ENCODE measurements at regions of chr15 and their contacts with region 1.

Region 1: GRCh38 chr15:68053701-68054627 is at the start of gene PIAS1:
- DNase-seq: peak; percentile 91
- ATAC-seq: peak; percentile 90
- H3K4me3 Mint-ChIP-seq: peak within 1 kb of the TSS; percentile 94
- H3K27ac Mint-ChIP-seq: peak within 1 kb of the TSS; percentile 94
- H3K4me1 Mint-ChIP-seq: peaks cover 35% of the 10 kb centered on the region
- H3K27me3 Mint-ChIP-seq: no peaks in the 10 kb centered on the region
- CTCF ChIP-seq: no peak
- total RNA-seq, gene PIAS1: 47.0 and 56.3 TPM in 2 replicates

Region 2: DNA sequence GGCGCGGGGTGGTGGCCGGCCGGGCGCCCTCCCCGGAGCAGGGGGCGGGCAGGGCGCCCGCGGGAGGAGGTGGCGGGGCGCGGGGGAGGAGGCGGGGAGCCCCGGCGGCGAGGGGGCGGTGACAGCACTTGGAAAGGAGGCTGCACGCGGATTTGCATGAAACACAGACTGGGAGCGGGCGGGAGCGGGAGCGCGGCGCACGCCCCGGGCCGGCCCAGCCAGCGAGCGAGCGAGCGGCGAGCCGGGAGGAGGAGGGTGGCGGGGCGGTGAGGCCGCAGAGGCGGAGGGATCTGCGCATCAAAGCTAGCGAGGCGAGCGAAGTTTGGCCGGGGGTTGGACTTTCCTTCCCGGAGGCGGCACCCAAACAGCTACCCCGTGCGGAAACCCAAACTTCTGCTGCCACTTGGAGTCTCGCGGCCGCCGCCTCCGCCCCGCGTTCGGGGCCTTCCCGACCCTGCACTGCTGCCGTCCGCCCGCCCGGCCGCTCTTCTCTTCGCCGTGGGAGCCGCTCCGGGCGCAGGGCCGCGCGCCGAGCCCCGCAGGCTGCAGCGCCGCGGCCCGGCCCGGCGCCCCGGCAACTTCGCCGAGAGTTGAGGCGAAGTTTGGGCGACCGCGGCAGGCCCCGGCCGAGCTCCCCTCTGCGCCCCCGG is 988.4 kb before region 1 on chr15 and contains the start of gene SMAD3:
- CTCF ChIA-PET with region 1: no interaction called
- POLR2A ChIA-PET with region 1: no interaction called
- intact Hi-C with region 1: loop called (anchors 5 kb)
- DNase-seq: peak; percentile 74
- ATAC-seq: peak; percentile 71
- H3K4me3 Mint-ChIP-seq: peak within 1 kb of the TSS; percentile 98
- H3K27ac Mint-ChIP-seq: peak within 1 kb of the TSS; percentile 95
- H3K4me1 Mint-ChIP-seq: peaks cover 47% of the 10 kb centered on the region
- H3K27me3 Mint-ChIP-seq: no peaks in the 10 kb centered on the region
- CTCF ChIP-seq: no peak
- total RNA-seq, gene SMAD3: 85.9 and 118 TPM in 2 replicates

Region 3: GRCh38 chr15:67542420-67543347 is 511.3 kb before region 1 on chr15 and contains the start of gene MAP2K5:
- CTCF ChIA-PET with region 1: no interaction called
- POLR2A ChIA-PET with region 1: interaction called, 5 read pairs
- intact Hi-C with region 1: loop called (anchors 10 kb)
- DNase-seq: peak; percentile 76
- ATAC-seq: peak; percentile 73
- H3K4me3 Mint-ChIP-seq: peak within 1 kb of the TSS; percentile 94
- H3K27ac Mint-ChIP-seq: peak within 1 kb of the TSS; percentile 94
- H3K4me1 Mint-ChIP-seq: peaks cover 56% of the 10 kb centered on the region
- H3K27me3 Mint-ChIP-seq: peaks cover 5% of the 10 kb centered on the region
- CTCF ChIP-seq: no peak
- total RNA-seq, gene MAP2K5: 18.9 and 26.7 TPM in 2 replicates

Region 4: GRCh38 chr15:68081869-68082505 is 28.0 kb after region 1 on chr15:
- CTCF ChIA-PET with region 1: no interaction called
- POLR2A ChIA-PET with region 1: interaction called, 11 read pairs
- intact Hi-C with region 1: no loop called
- DNase-seq: no peak
- ATAC-seq: no peak
- H3K4me3 Mint-ChIP-seq: peak overlapping the region; percentile 28
- H3K27ac Mint-ChIP-seq: peak overlapping the region; percentile 71
- H3K4me1 Mint-ChIP-seq: peaks cover 66% of the 10 kb centered on the region
- H3K27me3 Mint-ChIP-seq: no peaks in the 10 kb centered on the region
- CTCF ChIP-seq: no peak

Region 5: DNA sequence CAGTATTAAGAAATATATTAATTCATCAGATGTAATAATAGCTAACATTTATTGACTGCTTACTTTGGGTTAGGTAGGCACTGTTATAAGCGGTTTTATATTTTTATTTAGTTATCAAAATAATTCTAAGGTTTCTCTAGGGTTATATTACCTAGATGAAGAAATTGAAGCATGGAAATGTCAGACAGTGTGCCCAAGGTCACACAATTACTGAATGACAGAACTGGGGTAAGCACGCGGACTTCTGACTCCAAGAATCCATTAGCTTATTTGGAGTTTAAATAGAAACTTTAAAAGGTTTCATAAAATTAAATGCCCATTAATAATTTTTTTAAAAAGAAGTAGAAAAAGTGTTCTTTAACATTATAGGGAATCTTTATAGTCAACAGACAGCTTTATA is 76.9 kb after region 1 on chr15:
- CTCF ChIA-PET with region 1: no interaction called
- POLR2A ChIA-PET with region 1: interaction called, 3 read pairs
- intact Hi-C with region 1: loop called (anchors 5 kb)
- DNase-seq: no peak
- ATAC-seq: no peak
- H3K4me3 Mint-ChIP-seq: no peak overlapping the region
- H3K27ac Mint-ChIP-seq: no peak overlapping the region
- H3K4me1 Mint-ChIP-seq: peaks cover 3% of the 10 kb centered on the region
- H3K27me3 Mint-ChIP-seq: no peaks in the 10 kb centered on the region
- CTCF ChIP-seq: no peak

Region 6: DNA sequence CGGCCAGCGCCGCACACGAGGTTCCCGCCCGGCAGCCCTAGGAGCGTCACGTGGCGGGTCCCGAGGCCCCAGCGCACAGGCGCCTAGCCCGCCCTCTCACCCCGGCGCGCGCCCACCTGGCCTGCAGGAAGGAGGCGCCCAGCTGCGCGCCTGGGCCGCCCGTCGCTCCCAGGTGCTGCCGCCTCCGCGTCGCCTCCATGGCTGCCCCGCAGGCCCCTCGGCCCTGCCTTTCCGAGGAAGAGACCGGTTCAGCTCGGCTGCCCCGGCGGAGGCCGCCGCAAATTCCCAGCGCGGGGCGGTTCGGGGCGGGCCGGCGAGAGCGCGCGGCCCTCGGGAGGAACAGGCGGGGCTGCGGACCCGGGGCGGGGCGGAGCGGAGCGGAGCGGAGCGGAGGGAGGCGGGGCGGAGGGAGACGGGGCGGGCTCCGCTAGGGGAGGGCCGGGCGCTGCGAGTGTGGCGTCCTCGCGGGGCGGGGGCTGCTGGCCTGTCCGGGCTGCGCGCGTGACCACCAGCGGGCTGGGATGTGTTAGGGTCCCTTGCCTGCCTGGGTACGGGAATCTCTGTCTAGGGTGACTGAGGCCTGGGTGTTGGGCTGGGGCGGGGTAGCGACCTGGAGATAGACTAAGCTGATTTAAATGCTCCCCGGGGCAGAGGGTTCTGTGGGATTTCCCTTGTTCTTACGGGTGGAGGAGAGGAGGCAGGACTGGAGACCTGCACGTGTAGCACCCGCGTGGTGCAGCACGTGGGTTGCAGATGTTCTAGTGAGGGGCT is 175.6 kb after region 1 on chr15 and contains the start of gene CLN6:
- CTCF ChIA-PET with region 1: no interaction called
- POLR2A ChIA-PET with region 1: interaction called, 9 read pairs
- intact Hi-C with region 1: loop called (anchors 1 kb)
- DNase-seq: peak; percentile 85
- ATAC-seq: peak; percentile 88
- H3K4me3 Mint-ChIP-seq: peak within 1 kb of the TSS; percentile 92
- H3K27ac Mint-ChIP-seq: peak within 1 kb of the TSS; percentile 89
- H3K4me1 Mint-ChIP-seq: peaks cover 50% of the 10 kb centered on the region
- H3K27me3 Mint-ChIP-seq: no peaks in the 10 kb centered on the region
- CTCF ChIP-seq: no peak
- total RNA-seq, gene CLN6: 35.0 and 37.5 TPM in 2 replicates